HepG2 (cell line): ENCODE measurements at regions of chr16 and their contacts with region 1.

Region 1: DNA sequence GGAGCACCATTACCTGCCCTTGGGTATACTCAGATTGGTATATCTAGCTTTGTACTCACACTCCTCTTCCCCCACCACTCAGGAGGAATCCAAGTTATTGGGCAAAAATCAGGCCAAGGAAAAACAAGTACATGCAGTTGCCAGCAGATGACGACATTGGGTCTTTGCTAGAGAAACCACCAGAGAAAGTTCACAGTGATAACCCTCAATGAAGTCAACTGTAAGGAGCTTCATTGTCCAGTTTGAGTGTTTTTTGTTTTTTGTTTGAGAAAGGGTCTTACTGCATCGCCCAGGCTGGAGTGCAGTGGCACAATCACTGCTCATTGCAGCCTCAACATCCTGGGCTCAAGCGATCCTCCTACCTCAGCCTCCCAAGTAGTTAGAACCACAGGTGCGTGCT is 34.6 kb upstream of the TOX3 start:
- DNase-seq: peak; percentile 75
- ATAC-seq: peak; percentile 55
- H3K4me3 ChIP-seq: no peak overlapping the region
- H3K27ac ChIP-seq: no peak overlapping the region
- H3K4me1 ChIP-seq: peaks cover 59% of the 10 kb centered on the region
- H3K27me3 ChIP-seq: no peaks in the 10 kb centered on the region
- CTCF ChIP-seq: peak; percentile 72
- EP300 ChIP-seq: no peak
- POLR2A ChIP-seq: no peak
- RAD21 ChIP-seq: peak; percentile 90

Region 2: DNA sequence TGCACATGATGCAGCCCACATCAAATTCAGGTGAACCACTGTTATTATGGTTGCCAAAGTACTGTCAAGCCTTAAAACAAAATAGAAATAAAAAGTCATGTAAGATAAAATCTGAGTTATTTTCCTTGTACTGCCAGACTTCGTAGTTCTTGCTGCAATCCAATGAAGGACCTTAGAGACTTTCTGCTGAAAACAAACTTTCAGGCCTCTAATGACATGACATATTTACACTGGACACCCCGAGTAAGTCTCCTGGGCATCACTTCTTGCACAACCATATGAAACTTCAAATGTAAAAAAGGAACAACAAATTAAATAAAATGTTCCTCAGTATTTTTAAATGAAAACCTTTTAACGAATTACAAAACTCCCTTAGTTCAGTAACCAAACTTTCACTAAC is 101.3 kb before region 1 on chr16:
- CTCF ChIA-PET with region 1: no interaction called
- POLR2A ChIA-PET with region 1: no interaction called
- in situ Hi-C with region 1: no loop called
- intact Hi-C with region 1: no loop called
- DNase-seq: no peak
- ATAC-seq: no peak
- H3K4me3 ChIP-seq: no peak overlapping the region
- H3K27ac ChIP-seq: no peak overlapping the region
- H3K4me1 ChIP-seq: peaks cover 38% of the 10 kb centered on the region; the same call in 1 of the 2 replicates
- H3K27me3 ChIP-seq: no peaks in the 10 kb centered on the region
- CTCF ChIP-seq: no peak
- EP300 ChIP-seq: no peak
- POLR2A ChIP-seq: no peak
- RAD21 ChIP-seq: no peak

Region 3: GRCh38 chr16:52497067-52497816 is 84.3 kb before region 1 on chr16:
- CTCF ChIA-PET with region 1: no interaction called
- POLR2A ChIA-PET with region 1: interaction called, 19 read pairs
- in situ Hi-C with region 1: no loop called
- intact Hi-C with region 1: no loop called
- DNase-seq: peak; percentile 71
- ATAC-seq: peak; percentile 67
- H3K4me3 ChIP-seq: peak overlapping the region in 2 of 3 experiments; percentile 43 to 47; a peak in 4 of 6 replicates
- H3K27ac ChIP-seq: peak overlapping the region; percentile 94
- H3K4me1 ChIP-seq: peaks cover 98% of the 10 kb centered on the region
- H3K27me3 ChIP-seq: no peaks in the 10 kb centered on the region
- CTCF ChIP-seq: no peak
- EP300 ChIP-seq: peak in 1 of 2 experiments; percentile 55; a peak in 2 of 4 replicates
- POLR2A ChIP-seq: no peak
- RAD21 ChIP-seq: no peak

Region 4: DNA sequence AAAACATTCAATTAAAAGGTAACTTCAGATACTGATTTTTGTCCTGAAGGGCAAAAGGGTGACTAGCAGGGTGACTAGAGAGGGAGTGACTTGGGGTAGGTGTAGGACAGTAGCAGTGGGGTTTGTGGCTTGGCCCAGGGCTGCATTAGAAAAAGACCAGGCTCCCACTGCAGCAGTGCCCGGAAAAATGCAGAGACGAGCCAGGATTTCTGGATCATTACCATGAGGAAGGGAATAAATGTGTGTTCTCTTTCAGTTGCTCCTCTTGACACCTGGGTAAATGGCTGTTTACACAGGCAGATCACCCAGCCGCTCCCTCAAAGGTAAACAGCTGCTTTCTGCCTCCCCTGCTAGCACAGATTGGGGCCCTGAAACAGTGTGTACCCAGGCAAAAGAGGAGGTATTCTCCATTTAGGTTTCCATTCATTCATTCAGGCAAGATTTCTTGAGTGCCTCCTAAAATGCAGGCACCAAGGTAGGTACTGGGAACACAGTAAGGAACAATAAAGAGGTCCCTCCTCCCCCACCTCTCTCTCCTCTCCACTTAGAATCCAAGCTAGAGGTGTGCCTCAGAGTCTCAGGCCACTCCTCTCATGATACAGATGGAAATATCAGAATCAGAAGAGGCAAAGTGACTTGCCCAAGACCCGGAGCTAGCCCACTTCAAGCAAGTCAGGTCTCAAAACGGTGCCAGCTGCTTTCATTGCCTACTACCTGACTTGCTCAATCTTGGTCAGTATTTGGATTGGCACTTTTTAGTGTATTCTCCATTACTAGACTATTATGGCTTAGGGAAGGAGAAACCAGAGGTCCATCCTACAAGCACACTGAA is 19.4 kb before region 1 on chr16:
- CTCF ChIA-PET with region 1: interaction called, 3 read pairs
- POLR2A ChIA-PET with region 1: interaction called, 19 read pairs
- in situ Hi-C with region 1: no loop called
- intact Hi-C with region 1: no loop called
- DNase-seq: peak; percentile 54
- ATAC-seq: peak; percentile 55
- H3K4me3 ChIP-seq: peak overlapping the region; percentile 27 to 51 (median 40)
- H3K27ac ChIP-seq: peak overlapping the region; percentile 23
- H3K4me1 ChIP-seq: peaks cover 100% of the 10 kb centered on the region
- H3K27me3 ChIP-seq: no peaks in the 10 kb centered on the region
- CTCF ChIP-seq: 0 out of 2 replicates have a peak, but pooled peaks have one; percentile 3
- EP300 ChIP-seq: peak in 1 of 2 experiments; percentile 78; a peak in 2 of 4 replicates
- POLR2A ChIP-seq: no peak
- RAD21 ChIP-seq: no peak

Region 5: DNA sequence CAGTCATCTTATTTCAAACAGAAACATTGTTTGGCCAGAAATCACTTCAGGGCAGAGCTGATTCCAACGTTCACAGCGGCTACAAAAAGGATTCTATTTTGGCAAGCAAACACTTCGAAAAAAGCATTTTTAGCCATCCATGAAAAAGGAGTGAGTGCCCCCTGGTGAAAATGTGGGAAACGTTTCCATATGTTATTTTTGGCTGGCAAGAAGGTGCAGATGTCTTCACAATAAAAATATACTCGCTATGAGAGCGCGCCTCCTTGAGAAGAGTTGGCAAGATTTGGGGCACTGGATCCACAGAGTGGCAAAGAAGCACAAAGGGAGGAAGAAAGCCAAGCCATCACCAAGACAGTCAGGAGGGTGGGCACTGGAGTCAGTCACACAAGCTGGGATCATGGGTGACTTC is 280.1 kb after region 1 on chr16:
- CTCF ChIA-PET with region 1: interaction called, 23 read pairs
- POLR2A ChIA-PET with region 1: interaction called, 5 read pairs
- in situ Hi-C with region 1: loop called (anchors 5 kb)
- intact Hi-C with region 1: loop called (anchors 1 kb)
- DNase-seq: peak; percentile 65
- ATAC-seq: peak; percentile 78
- H3K4me3 ChIP-seq: no peak overlapping the region
- H3K27ac ChIP-seq: no peak overlapping the region
- H3K4me1 ChIP-seq: peaks cover 12% of the 10 kb centered on the region
- H3K27me3 ChIP-seq: peaks cover 0 to 5% of the 10 kb centered on the region in 2 experiments; a peak in 1 of 5 replicates
- CTCF ChIP-seq: peak; percentile 89
- EP300 ChIP-seq: 0 out of 4 replicates have a peak, but pooled peaks of 1 of the 2 experiments have one; percentile 19
- POLR2A ChIP-seq: no peak
- RAD21 ChIP-seq: peak; percentile 91